Activated T-helper 2 cell treated with anti-CD3 and anti-CD28 coated beads, Interferon-gamma antibody, Interleukin-2, Interleukin-4, amounts not matched to agents 10 μg/mL and 5 μg/mL and 100 μg/mL, durations not matched to agents 14 hours and 24 hours and 36 hours (primary cell): ENCODE measurements at regions of chr10 and their contacts with region 1.

Region 1: DNA sequence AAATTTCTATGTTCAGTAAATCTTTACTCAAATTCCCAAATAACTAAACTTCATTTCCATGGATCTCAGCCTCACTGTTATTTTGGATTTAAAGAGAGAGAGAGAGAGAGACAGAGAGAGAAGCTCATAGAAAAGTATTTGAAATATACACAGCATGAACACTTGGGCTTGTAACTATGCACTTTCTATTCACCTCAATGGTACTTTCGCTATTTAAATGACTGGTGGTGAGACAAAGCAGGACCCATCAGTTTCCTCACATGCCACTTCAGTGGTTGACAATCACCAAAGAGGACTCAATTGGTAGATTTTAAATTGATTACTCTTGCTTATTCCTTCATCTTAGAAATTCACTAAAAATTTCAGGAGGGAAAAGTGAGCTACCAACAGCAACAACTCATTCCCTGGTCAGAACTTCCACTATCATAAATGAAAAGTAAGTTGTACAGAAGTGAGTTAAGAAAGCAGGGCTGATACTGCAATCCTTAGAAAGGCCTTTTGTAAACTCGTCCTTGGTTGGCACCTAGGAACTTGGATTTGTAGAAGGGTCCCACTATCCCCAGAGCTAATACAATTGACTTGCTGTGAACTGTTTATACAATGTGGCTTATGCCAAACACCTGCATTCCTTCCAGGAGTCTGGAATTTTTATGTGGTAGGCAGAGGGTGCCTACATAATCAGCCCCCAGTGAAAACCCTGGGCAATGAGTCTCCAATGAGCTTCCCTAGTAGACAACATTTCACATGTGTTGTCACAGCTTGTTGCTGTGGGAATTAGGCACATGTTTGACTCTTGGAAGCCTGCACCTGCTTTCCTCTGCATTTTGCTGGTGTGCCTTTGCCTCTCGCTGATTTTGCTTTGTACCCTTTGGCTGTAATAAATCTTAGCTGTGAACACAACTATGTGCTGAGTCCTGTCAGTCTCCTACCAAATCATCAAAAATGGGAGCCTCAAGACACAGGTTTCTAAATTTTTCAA is 10.8 kb downstream of the ERLIN1 start:
- DNase-seq: no peak
- H3K4me3 Mint-ChIP-seq: no peak overlapping the region
- H3K27ac Mint-ChIP-seq: peak overlapping the region; percentile 49
- H3K4me1 Mint-ChIP-seq: peaks cover 30% of the 10 kb centered on the region
- H3K27me3 Mint-ChIP-seq: no peaks in the 10 kb centered on the region

Region 2: DNA sequence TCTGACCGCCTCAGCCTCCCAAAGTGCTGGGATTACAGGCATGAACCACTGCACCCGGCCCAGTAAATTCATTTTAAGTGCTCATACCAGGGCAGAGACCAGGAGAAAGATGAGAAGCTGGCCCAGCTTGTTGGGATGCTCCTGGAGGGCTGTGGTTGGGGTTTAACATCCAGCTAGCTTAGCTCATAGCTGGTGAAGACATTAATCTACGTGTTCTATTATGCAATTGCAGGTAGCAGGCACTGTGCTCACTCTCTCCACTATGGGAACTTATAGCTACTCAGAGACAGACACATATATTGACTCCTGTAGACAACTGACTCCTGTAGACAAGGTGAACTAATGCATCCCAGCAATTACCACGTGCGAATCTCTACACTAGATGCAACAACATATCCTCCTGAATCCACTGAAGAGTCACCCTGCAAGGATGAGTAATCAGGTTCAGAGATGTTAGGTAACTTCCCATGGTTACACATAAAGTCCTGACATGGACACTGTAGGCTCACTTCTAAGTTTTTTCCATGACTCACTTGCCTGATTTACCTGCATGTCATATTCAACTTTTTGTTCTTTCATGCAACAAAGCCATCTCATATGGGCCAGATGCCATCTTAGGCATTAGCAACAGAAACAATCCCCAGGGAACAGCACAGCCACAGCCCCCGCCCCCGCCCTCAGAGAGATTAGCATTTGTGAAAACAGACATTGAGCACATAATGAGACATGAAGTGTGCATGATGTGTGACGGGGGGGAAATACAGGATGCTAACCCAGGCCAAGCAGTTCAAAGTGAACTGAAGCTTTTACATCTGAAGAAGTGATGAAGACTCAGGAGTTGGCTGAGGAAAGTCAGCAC is 26.4 kb before region 1 on chr10:
- intact Hi-C with region 1: loop called (anchors 2 kb)
- DNase-seq: no peak
- H3K4me3 Mint-ChIP-seq: no peak overlapping the region
- H3K27ac Mint-ChIP-seq: peak overlapping the region; percentile 56
- H3K4me1 Mint-ChIP-seq: peaks cover 13% of the 10 kb centered on the region
- H3K27me3 Mint-ChIP-seq: no peaks in the 10 kb centered on the region

Region 3: DNA sequence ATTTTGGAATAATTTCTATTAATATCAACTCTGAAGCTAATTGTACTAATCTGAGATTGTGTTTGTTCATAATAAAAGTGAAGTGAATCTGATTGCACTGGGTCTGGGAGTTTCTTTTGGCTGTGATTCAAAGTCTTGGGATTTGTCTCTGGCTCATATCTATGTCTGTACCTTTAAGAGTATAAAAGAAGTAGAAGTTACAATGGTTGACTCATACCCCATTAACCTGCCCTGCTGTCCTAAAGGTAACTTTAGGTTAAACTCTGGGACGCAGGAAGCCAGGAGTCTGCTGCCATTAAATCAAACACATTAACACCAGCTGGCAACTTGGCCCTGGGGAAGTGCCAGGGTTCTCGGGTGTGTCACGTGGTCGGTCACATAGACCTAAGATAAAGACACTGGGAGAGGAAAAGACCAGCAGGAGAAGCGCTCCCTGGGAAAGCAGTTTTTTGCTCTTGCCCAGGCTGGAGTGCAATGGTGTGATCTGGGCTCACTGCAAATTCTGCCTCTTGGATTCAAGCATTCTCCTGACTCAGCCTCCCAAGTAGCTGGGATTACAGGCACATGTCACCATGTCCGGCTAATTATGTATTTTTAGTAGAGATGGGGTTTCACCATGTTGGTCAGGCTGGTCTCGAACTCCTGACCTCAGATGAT is 189.9 kb after region 1 on chr10:
- intact Hi-C with region 1: no loop called
- DNase-seq: no peak
- H3K4me3 Mint-ChIP-seq: no peak overlapping the region
- H3K27ac Mint-ChIP-seq: peak overlapping the region; percentile 53
- H3K4me1 Mint-ChIP-seq: peaks cover 31% of the 10 kb centered on the region
- H3K27me3 Mint-ChIP-seq: no peaks in the 10 kb centered on the region